ENCODE measurements at regions of chr4 and their contacts with region 1.

Region 1: GRCh38 chr4:148441986-148442831 is at the start of gene NR3C2:
- DNase-seq: peak; percentile 91 to 99 (median 98)
- H3K4me3 ChIP-seq: peak within 1 kb of the TSS; percentile 88
- H3K4me3 Mint-ChIP-seq: peak within 1 kb of the TSS; percentile 95 to 100 (median 99)
- H3K27ac ChIP-seq: peak within 1 kb of the TSS; percentile 96
- H3K27ac Mint-ChIP-seq: peak within 1 kb of the TSS; percentile 97 to 100 (median 98)
- H3K4me1 ChIP-seq: peaks cover 51% of the 10 kb centered on the region
- H3K4me1 Mint-ChIP-seq: peaks cover 50 to 65% (median 62%) of the 10 kb centered on the region in 3 donors
- H3K27me3 ChIP-seq: no peaks in the 10 kb centered on the region
- H3K27me3 Mint-ChIP-seq: peaks cover 0 to 16% of the 10 kb centered on the region in 2 donors
- total RNA-seq, gene NR3C2: 5.7 to 7.3 TPM

Region 2: DNA sequence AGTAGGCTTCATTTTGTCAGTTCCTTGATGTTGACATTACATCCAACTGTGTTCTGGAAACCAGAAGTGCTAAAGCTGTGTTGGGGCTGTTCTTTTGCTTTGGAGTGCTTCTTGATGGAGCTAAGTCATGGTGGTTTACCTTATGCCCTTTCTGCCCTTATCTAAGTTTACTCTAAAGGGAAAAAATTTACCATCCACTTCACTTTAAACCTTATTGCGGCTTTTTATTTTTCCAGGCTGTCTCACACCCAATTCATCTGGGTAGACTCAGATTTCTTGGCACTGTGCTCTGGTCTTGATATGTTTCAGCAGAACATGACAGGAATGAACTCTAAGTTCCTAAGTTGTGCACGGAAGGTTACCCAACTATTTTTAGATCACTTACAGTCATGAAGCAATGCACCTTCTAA is 1391.8 kb before region 1 on chr4:
- CTCF ChIA-PET with region 1: no interaction called
- POLR2A ChIA-PET with region 1: interaction called, 12 read pairs
- DNase-seq: no peak
- H3K4me3 ChIP-seq: no peak overlapping the region
- H3K4me3 Mint-ChIP-seq: no peak overlapping the region
- H3K27ac ChIP-seq: no peak overlapping the region
- H3K27ac Mint-ChIP-seq: no peak overlapping the region
- H3K4me1 ChIP-seq: no peaks in the 10 kb centered on the region
- H3K4me1 Mint-ChIP-seq: no peaks in the 10 kb centered on the region
- H3K27me3 ChIP-seq: no peaks in the 10 kb centered on the region
- H3K27me3 Mint-ChIP-seq: peaks cover 8 to 54% of the 10 kb centered on the region in 2 donors

Region 3: DNA sequence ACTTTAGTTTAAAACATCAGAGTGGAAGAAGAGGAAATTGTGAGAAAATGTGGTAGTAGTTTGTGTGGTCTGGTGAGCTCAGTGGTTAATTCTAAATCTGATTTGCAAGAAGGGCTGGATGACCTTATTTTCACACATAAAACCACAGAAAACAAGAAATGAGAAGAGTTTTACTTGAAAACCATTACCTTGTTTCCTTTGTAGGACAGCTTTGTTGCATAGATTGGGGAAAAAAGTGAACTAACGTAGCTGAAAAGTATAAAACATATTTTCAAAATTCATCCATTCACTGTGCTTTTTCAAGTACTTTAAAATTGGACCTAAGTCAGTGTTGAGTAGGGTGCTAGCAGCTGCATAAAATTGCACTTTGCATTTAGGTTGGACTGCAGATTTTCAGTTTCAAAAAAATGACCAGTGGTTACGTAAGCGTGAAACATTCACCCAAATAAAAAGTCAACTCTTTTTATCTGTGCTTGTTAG is 499.0 kb before region 1 on chr4:
- CTCF ChIA-PET with region 1: no interaction called
- POLR2A ChIA-PET with region 1: interaction called, 10 read pairs
- DNase-seq: peak in 1 of 5 donors; percentile 61
- H3K4me3 ChIP-seq: peak overlapping the region; percentile 15
- H3K4me3 Mint-ChIP-seq: peak overlapping the region; percentile 11 to 77 (median 69)
- H3K27ac ChIP-seq: no peak overlapping the region
- H3K27ac Mint-ChIP-seq: peak overlapping the region; percentile 0 to 92 (median 76)
- H3K4me1 ChIP-seq: peaks cover 23% of the 10 kb centered on the region
- H3K4me1 Mint-ChIP-seq: peaks cover 39 to 56% (median 52%) of the 10 kb centered on the region in 3 donors
- H3K27me3 ChIP-seq: no peaks in the 10 kb centered on the region
- H3K27me3 Mint-ChIP-seq: peaks cover 0 to 4% of the 10 kb centered on the region in 2 donors

Region 4: GRCh38 chr4:148056869-148057268 is 385.3 kb before region 1 on chr4:
- CTCF ChIA-PET with region 1: interaction called, 7 read pairs
- POLR2A ChIA-PET with region 1: interaction called, 25 read pairs
- DNase-seq: peak; percentile 14 to 77 (median 46)
- H3K4me3 ChIP-seq: no peak overlapping the region
- H3K4me3 Mint-ChIP-seq: peak overlapping the region; percentile 31 to 83 (median 60)
- H3K27ac ChIP-seq: no peak overlapping the region
- H3K27ac Mint-ChIP-seq: peak overlapping the region; percentile 74 to 99 (median 90)
- H3K4me1 ChIP-seq: peaks cover 80% of the 10 kb centered on the region
- H3K4me1 Mint-ChIP-seq: peaks cover 84 to 98% (median 97%) of the 10 kb centered on the region in 3 donors
- H3K27me3 ChIP-seq: no peaks in the 10 kb centered on the region
- H3K27me3 Mint-ChIP-seq: no peaks in the 10 kb centered on the region

Region 5: GRCh38 chr4:148118633-148119032 is 323.6 kb before region 1 on chr4:
- CTCF ChIA-PET with region 1: no interaction called
- POLR2A ChIA-PET with region 1: no interaction called
- DNase-seq: no peak
- H3K4me3 ChIP-seq: no peak overlapping the region
- H3K4me3 Mint-ChIP-seq: no peak overlapping the region
- H3K27ac ChIP-seq: no peak overlapping the region
- H3K27ac Mint-ChIP-seq: peak overlapping the region in 2 of 8 donors; percentile 20 to 44
- H3K4me1 ChIP-seq: no peaks in the 10 kb centered on the region
- H3K4me1 Mint-ChIP-seq: peaks cover 11 to 38% (median 15%) of the 10 kb centered on the region in 3 donors
- H3K27me3 ChIP-seq: no peaks in the 10 kb centered on the region
- H3K27me3 Mint-ChIP-seq: no peaks in the 10 kb centered on the region

Region 6: GRCh38 chr4:148376151-148376550 is 66.1 kb before region 1 on chr4:
- CTCF ChIA-PET with region 1: interaction called, 10 read pairs
- POLR2A ChIA-PET with region 1: interaction called, 48 read pairs
- DNase-seq: peak in 4 of 5 donors; percentile 11 to 77 (median 64)
- H3K4me3 ChIP-seq: peak overlapping the region; percentile 27
- H3K4me3 Mint-ChIP-seq: peak overlapping the region; percentile 66 to 85 (median 74)
- H3K27ac ChIP-seq: no peak overlapping the region
- H3K27ac Mint-ChIP-seq: peak overlapping the region; percentile 49 to 96 (median 80)
- H3K4me1 ChIP-seq: peaks cover 24% of the 10 kb centered on the region
- H3K4me1 Mint-ChIP-seq: peaks cover 30 to 46% (median 41%) of the 10 kb centered on the region in 3 donors
- H3K27me3 ChIP-seq: no peaks in the 10 kb centered on the region
- H3K27me3 Mint-ChIP-seq: no peaks in the 10 kb centered on the region

Region 7: DNA sequence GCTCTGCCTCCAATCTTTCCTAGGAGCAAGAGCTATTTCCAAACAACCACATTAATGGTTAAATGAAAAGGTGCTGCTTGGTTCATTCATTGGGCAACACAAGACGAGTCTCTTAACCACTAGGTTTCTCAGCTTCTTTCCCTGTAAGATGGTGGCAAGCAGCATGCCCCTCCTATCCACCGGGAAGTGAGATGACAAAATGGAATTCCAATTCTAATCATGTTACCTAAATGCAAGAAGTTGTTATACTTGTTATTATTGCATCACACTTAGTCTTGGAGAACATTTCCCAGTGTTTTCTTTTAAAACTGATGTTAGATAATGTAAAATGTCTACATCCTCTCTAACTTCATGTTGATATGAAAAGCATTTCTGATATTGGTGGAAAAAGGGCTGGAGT is 240.3 kb after region 1 on chr4:
- CTCF ChIA-PET with region 1: no interaction called
- POLR2A ChIA-PET with region 1: interaction called, 11 read pairs
- DNase-seq: no peak
- H3K4me3 ChIP-seq: no peak overlapping the region
- H3K4me3 Mint-ChIP-seq: no peak overlapping the region
- H3K27ac ChIP-seq: no peak overlapping the region
- H3K27ac Mint-ChIP-seq: no peak overlapping the region
- H3K4me1 ChIP-seq: no peaks in the 10 kb centered on the region
- H3K4me1 Mint-ChIP-seq: no peaks in the 10 kb centered on the region
- H3K27me3 ChIP-seq: no peaks in the 10 kb centered on the region
- H3K27me3 Mint-ChIP-seq: peaks cover 0 to 5% of the 10 kb centered on the region in 2 donors